Calu3 (cell line): ENCODE measurements at regions of chr2 and their contacts with region 1.

Region 1: DNA sequence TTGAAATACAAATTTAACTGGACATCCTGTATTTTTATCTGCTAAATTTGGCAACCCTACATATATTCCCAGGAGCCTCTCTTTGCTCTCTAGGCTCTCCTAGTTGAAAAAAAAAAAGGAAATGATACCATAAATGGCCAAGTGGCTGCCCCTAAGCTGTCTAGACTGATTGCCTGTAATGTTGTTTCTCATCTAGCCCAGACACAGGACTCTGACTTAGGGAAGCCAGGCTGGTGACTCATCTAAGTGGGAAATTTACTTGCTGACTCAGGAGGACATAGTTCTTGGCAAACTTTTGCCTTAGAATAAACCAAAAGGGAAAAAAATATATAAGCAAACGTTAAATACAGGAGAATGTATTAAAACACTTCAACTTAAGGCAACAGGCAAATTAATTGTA is 14.6 kb upstream of the ITGAV start:
- DNase-seq: peak; percentile 67
- H3K4me3 Mint-ChIP-seq: no peak overlapping the region
- H3K27ac Mint-ChIP-seq: peak overlapping the region; percentile 67
- H3K4me1 Mint-ChIP-seq: peaks cover 32% of the 10 kb centered on the region
- H3K27me3 Mint-ChIP-seq: no peaks in the 10 kb centered on the region
- CTCF ChIP-seq: no peak

Region 2: GRCh38 chr2:186544255-186544675 is 31.0 kb before region 1 on chr2:
- CTCF ChIA-PET with region 1: interaction called, 3 read pairs
- intact Hi-C with region 1: loop called (anchors 5 kb)
- DNase-seq: peak; percentile 38
- H3K4me3 Mint-ChIP-seq: peak overlapping the region; percentile 31
- H3K27ac Mint-ChIP-seq: no peak overlapping the region
- H3K4me1 Mint-ChIP-seq: peaks cover 23% of the 10 kb centered on the region
- H3K27me3 Mint-ChIP-seq: no peaks in the 10 kb centered on the region
- CTCF ChIP-seq: no peak

Region 3: GRCh38 chr2:186559848-186560247 is 15.5 kb before region 1 on chr2:
- CTCF ChIA-PET with region 1: no interaction called
- intact Hi-C with region 1: no loop called
- DNase-seq: no peak
- H3K4me3 Mint-ChIP-seq: no peak overlapping the region
- H3K27ac Mint-ChIP-seq: no peak overlapping the region
- H3K4me1 Mint-ChIP-seq: peaks cover 33% of the 10 kb centered on the region
- H3K27me3 Mint-ChIP-seq: no peaks in the 10 kb centered on the region
- CTCF ChIP-seq: no peak

Region 4: GRCh38 chr2:186734957-186735734 is 159.8 kb after region 1 on chr2:
- CTCF ChIA-PET with region 1: no interaction called
- intact Hi-C with region 1: no loop called
- DNase-seq: no peak
- H3K4me3 Mint-ChIP-seq: no peak overlapping the region
- H3K27ac Mint-ChIP-seq: no peak overlapping the region
- H3K4me1 Mint-ChIP-seq: no peaks in the 10 kb centered on the region
- H3K27me3 Mint-ChIP-seq: no peaks in the 10 kb centered on the region
- CTCF ChIP-seq: no peak